Activated naive CD4-positive, alpha-beta T cell treated with anti-CD3 and anti-CD28 coated beads, Interleukin-2, amount 10 ng/mL, durations not matched to agents 7 days and 5 days (primary cell): ENCODE measurements at regions of chr10 and their contacts with region 1.

Region 1: GRCh38 chr10:127906548-127907377 is at the start of gene PTPRE:
- DNase-seq: peak; percentile 68
- H3K4me3 Mint-ChIP-seq: no peak within 1 kb of the TSS
- H3K27ac Mint-ChIP-seq: no peak within 1 kb of the TSS
- H3K4me1 Mint-ChIP-seq: no peaks in the 10 kb centered on the region
- H3K27me3 Mint-ChIP-seq: peaks cover 64% of the 10 kb centered on the region

Region 2: GRCh38 chr10:127872871-127873600 is 33.7 kb before region 1 on chr10:
- CTCF ChIA-PET with region 1: interaction called, 13 read pairs
- DNase-seq: no peak
- H3K4me3 Mint-ChIP-seq: no peak overlapping the region
- H3K27ac Mint-ChIP-seq: no peak overlapping the region
- H3K4me1 Mint-ChIP-seq: peaks cover 6% of the 10 kb centered on the region
- H3K27me3 Mint-ChIP-seq: peaks cover 27% of the 10 kb centered on the region